Sciatic nerve (tissue), 2 donors: ENCODE measurements at regions of chrX and their contacts with region 1.

Region 1: DNA sequence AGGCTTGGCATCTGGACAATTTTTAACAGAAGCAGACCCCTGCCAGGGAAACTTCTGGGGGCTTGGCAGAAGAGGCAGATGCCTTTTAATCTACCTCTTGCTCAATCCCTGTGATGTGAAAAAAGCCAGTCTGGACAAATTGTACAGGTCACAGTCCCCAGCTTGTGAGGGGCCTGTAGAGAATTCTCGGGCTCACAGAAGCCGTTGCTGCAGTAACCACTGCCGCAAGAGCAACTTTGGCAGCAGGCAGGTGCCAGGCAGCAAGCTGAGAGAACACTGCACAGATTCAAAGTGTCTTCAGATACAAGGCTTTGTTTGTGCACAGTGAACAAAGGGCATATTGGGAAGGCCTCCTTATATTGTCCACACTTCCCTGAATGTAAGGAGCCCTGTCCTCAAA is 11.7 kb downstream of the GPKOW start:
- DNase-seq: no peak
- ATAC-seq: no peak

Region 2: DNA sequence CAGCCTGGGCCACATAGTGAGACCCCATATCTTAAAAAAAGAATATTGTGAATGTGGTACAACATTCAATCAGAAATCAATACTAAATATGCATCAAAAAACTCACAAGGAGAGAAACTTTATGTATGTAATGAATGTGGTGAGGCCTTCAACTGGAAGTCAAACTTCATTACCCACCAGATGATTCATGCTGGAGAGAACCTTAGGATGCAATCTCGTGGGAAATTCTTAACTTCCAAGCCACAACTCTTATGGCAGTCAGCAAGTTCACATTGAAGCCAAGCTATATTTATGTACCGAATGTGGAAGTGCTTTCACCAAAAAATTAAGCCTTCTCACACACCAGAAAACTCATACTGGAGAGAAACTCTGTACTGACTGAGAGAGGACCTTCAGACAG is 1368.3 kb before region 1 on chrX:
- intact Hi-C with region 1: no loop called
- DNase-seq: no peak
- ATAC-seq: no peak

Region 3: DNA sequence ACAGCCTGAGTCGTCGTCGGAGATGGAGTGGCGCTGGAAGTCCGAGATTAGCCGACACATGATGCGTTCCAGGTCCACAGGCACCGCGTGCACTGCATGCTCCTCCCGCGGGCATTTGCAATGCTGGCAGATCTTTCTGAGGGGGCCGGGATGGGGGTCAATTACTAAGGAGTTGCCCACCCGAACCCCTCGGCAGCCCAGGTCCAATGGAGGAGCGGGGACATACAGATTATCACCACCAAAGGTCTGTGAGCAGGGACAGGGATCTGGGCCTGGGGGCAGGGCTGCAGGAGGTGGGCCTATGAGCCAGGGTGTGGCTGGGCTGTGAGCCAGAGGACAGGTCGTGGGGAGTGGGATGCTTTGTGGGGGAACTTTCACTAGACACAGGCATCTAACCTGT is 72.0 kb after region 1 on chrX:
- intact Hi-C with region 1: loop called (anchors 2 kb)
- DNase-seq: no peak
- ATAC-seq: peak; percentile 1